ENCODE measurements at regions of chr1 and their contacts with region 1.

Region 1: DNA sequence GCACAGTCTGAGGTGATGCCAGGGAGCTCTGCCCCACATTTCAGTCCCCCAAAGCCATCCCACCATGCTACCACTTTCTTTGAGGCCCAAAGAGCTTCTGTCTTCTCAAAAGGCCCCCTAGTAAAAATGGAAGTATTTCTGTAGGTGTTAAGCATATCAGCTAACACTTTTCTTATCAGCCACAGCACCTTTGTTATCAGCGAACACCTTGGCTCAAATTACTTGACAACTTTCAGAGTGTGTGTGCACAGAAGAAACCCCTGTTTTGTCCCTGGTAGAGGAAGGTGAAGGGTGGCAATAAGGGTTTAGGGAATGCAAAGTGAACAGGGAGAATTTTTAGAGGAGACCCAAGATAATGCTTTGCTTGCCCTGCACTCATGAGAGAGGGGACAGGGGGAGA is 54.8 kb upstream of the GJA8 start:
- DNase-seq: no peak
- ATAC-seq: no peak
- H3K4me3 ChIP-seq: no peak overlapping the region
- H3K27ac ChIP-seq: no peak overlapping the region
- H3K4me1 ChIP-seq: peaks cover 0 to 12% (median 0%) of the 10 kb centered on the region in 9 donors
- H3K27me3 ChIP-seq: no peaks in the 10 kb centered on the region
- CTCF ChIP-seq: no peak

Region 2: DNA sequence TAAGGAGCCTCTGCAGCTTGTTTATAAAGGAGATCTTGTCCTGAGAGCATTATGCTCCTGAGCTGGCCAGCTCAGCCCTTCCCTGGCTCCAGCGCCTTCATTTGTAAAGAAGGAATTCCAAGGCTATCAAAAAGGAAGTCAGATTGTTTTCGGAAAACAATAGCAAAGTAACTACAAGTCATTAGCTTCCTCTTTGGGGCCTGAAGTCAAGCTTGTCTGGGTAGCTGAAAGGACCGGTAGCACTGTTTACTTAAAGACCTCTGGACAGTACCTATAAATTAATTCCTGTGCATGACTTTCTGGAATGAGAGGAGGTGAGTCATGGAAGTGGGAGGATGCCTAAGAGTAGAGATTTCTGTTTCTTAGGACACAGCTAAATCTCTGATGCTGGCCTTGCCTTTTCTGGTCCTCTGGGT is 66.8 kb before region 1 on chr1:
- intact Hi-C with region 1: no loop called
- DNase-seq: peak in 1 of 2 donors; percentile 21
- ATAC-seq: peak; percentile 71 to 88 (median 80)
- H3K4me3 ChIP-seq: no peak overlapping the region
- H3K27ac ChIP-seq: peak overlapping the region in 8 of 10 donors; percentile 11 to 80 (median 59)
- H3K4me1 ChIP-seq: peaks cover 0 to 17% (median 5%) of the 10 kb centered on the region in 9 donors
- H3K27me3 ChIP-seq: no peaks in the 10 kb centered on the region
- CTCF ChIP-seq: no peak

Region 3: GRCh38 chr1:147878022-147878421 is 30.2 kb after region 1 on chr1:
- intact Hi-C with region 1: loop called in 1 of 10 experiments (anchors 1 kb)
- DNase-seq: no peak
- ATAC-seq: peak in 5 of 8 donors; percentile 25 to 44 (median 30)
- H3K4me3 ChIP-seq: no peak overlapping the region
- H3K27ac ChIP-seq: no peak overlapping the region
- H3K4me1 ChIP-seq: no peaks in the 10 kb centered on the region
- H3K27me3 ChIP-seq: no peaks in the 10 kb centered on the region
- CTCF ChIP-seq: no peak

Measured in heart right ventricle (tissue), 16 donors.